Pancreas (tissue), 10 donors: ENCODE measurements at regions of chr12 and their contacts with region 1.

Region 1: GRCh38 chr12:93502802-93503623 is 35.7 kb downstream of the MRPL42 start:
- DNase-seq: peak in 3 of 6 donors; percentile 8 to 48 (median 24)
- ATAC-seq: peak in 3 of 4 donors; percentile 56 to 61 (median 61)
- H3K4me3 ChIP-seq: no peak overlapping the region
- H3K27ac ChIP-seq: no peak overlapping the region
- H3K4me1 ChIP-seq: no peaks in the 10 kb centered on the region
- H3K27me3 ChIP-seq: no peaks in the 10 kb centered on the region
- CTCF ChIP-seq: peak; percentile 9 to 75 (median 52)

Region 2: GRCh38 chr12:93979189-93979588 is 476.2 kb after region 1 on chr12:
- intact Hi-C with region 1: loop called in 1 of 3 experiments (anchors 5 kb)
- DNase-seq: peak in 2 of 6 donors; percentile 11 to 31
- ATAC-seq: peak in 3 of 4 donors; percentile 72 to 76 (median 75)
- H3K4me3 ChIP-seq: no peak overlapping the region
- H3K27ac ChIP-seq: no peak overlapping the region
- H3K4me1 ChIP-seq: no peaks in the 10 kb centered on the region
- H3K27me3 ChIP-seq: no peaks in the 10 kb centered on the region
- CTCF ChIP-seq: peak in 2 of 4 donors; percentile 14

Region 3: DNA sequence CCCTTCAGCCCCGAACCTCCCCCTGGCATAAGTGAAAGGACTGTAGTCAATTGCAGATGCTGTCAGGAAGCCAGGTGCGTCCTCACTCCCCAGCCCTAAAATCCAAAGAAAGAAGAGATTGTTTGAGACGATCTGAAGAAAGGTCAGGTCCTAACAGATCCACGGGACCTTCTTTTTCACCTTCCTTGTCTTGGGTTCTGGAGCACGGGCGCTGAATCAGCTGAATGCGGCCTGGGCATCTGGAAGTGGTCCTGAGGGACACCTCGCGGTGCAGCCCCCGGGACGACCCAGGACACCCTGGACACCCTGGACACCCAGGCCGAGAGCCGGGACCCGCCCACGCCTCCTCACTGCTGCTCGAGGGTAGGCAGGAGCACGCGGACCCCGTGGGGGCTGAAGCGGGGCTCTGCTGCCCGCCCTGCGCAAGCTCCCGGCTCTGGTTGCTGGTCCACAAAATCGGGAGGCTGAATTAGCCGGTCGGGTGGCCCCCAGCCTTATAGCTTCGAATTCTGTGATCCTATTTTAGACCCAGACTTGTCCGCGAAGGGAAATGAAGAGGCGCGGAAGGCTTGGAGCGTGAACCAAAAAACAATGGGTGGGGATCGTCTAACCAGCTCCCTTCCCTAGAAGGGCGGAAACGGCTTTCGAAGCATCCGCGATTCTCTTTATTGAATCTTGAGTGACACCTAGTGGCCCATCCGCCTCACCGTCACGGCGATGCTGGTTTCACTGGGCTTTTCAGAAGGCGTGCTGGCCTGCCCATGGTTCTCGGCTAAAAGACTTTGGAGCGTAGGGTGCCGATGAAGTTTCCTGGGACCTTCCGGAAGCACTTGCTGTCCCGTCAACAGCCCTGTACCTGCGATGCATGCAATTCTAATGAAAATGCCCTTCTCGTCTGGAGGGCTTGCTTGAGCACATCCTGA is 599.0 kb after region 1 on chr12:
- intact Hi-C with region 1: loop called in 2 of 3 experiments (anchors 10 kb)
- DNase-seq: peak; percentile 65 to 89 (median 80)
- ATAC-seq: peak; percentile 91 to 96 (median 94)
- H3K4me3 ChIP-seq: peak overlapping the region; percentile 31 to 67 (median 45)
- H3K27ac ChIP-seq: no peak overlapping the region
- H3K4me1 ChIP-seq: no peaks in the 10 kb centered on the region
- H3K27me3 ChIP-seq: peaks cover 0 to 2% (median 0%) of the 10 kb centered on the region in 4 donors
- CTCF ChIP-seq: peak; percentile 46 to 75 (median 60)